Heart left ventricle (tissue), 16 donors: ENCODE measurements at regions of chr7 and their contacts with region 1.

Region 1: DNA sequence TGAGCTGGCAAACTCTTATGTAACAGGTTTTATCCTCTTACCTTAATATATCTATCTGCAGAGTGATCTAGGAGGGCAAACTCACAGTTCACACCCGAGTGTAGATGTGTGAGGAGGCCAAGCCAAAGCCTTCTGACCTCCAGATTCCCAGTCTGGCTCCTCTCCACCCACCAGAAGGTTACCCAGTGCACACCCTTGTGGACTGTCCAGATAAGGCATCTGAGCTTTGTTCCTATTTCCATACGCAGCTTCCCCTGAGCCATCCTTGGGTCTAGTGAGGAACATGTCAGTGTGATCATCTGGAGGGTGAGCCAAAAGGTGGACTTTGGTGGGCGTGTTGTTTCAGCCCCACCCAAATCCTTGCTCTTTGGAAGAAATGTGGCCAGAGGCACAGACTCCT is 203.0 kb upstream of the MEOX2 start:
- DNase-seq: peak in 4 of 5 donors; percentile 19 to 36 (median 32)
- ATAC-seq: peak in 3 of 4 donors; percentile 70 to 82 (median 81)
- H3K4me3 ChIP-seq: peak overlapping the region in 3 of 12 donors; percentile 4 to 20 (median 10)
- H3K27ac ChIP-seq: peak overlapping the region in 1 of 12 donors; percentile 40
- H3K4me1 ChIP-seq: peaks cover 0 to 9% (median 0%) of the 10 kb centered on the region in 12 donors
- H3K27me3 ChIP-seq: no peaks in the 10 kb centered on the region
- CTCF ChIP-seq: peak; percentile 15 to 54 (median 40)
- POLR2A ChIP-seq: no peak

Region 2: GRCh38 chr7:15764851-15765382 is 124.6 kb before region 1 on chr7:
- intact Hi-C with region 1: loop called in 1 of 10 experiments (anchors 5 kb)
- DNase-seq: peak in 3 of 5 donors; percentile 36 to 64 (median 60)
- ATAC-seq: peak; percentile 51 to 85 (median 67)
- H3K4me3 ChIP-seq: no peak overlapping the region
- H3K27ac ChIP-seq: peak overlapping the region in 11 of 12 donors; percentile 6 to 82 (median 55)
- H3K4me1 ChIP-seq: peaks cover 0 to 22% (median 4%) of the 10 kb centered on the region in 12 donors
- H3K27me3 ChIP-seq: no peaks in the 10 kb centered on the region
- CTCF ChIP-seq: no peak
- POLR2A ChIP-seq: no peak

Region 3: DNA sequence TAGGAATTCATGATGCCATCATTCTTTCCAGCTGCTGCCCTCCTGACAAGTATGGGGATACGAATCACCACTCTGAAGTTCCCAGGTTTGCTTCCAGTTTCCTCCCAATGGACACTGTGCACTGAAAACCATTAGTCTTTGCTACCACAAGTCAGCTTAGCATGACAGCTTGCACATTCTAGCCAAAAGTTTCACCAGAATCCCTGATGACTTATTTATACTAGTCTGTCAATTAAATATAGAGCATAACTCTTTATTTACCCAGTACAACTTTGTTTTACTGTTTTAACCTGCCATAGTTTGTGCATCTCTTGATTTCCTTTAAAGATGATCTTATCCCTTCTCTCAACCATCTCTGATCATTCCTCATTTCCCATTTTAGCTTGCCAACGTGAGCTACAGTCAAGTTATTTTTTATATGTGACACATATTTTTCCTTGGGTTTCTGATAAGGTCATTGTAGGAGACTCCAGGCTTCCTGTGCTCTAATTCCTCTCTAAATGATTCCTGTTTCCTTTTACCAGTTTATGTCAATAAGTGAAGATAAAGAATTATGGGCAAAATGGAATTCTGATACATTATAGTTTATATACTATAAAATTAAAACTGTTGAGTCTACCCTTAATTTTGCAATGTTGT is 35.6 kb before region 1 on chr7:
- intact Hi-C with region 1: loop called in 1 of 10 experiments (anchors 5 kb)
- DNase-seq: no peak
- ATAC-seq: peak; percentile 36 to 81 (median 49)
- H3K4me3 ChIP-seq: no peak overlapping the region
- H3K27ac ChIP-seq: peak overlapping the region in 5 of 12 donors; percentile 8 to 53 (median 15)
- H3K4me1 ChIP-seq: peaks cover 0 to 32% (median 11%) of the 10 kb centered on the region in 12 donors
- H3K27me3 ChIP-seq: no peaks in the 10 kb centered on the region
- CTCF ChIP-seq: no peak
- POLR2A ChIP-seq: no peak

Region 4: GRCh38 chr7:15967551-15967950 is 78.0 kb after region 1 on chr7:
- intact Hi-C with region 1: no loop called
- DNase-seq: no peak
- ATAC-seq: no peak
- H3K4me3 ChIP-seq: no peak overlapping the region
- H3K27ac ChIP-seq: no peak overlapping the region
- H3K4me1 ChIP-seq: peaks cover 0 to 4% (median 0%) of the 10 kb centered on the region in 12 donors
- H3K27me3 ChIP-seq: no peaks in the 10 kb centered on the region
- CTCF ChIP-seq: no peak
- POLR2A ChIP-seq: no peak